ENCODE measurements at regions of chr1 and their contacts with region 1.

Region 1: GRCh38 chr1:202329891-202330290 is 11.8 kb downstream of the UBE2T start:
- DNase-seq: no peak
- H3K4me3 ChIP-seq: no peak overlapping the region
- H3K27ac ChIP-seq: no peak overlapping the region
- H3K4me1 ChIP-seq: peaks cover 0 to 7% (median 6%) of the 10 kb centered on the region in 4 donors
- H3K27me3 ChIP-seq: no peaks in the 10 kb centered on the region
- CTCF ChIP-seq: no peak
- EP300 ChIP-seq: no peak
- POLR2A ChIP-seq: no peak

Region 2: GRCh38 chr1:201408176-201408833 is 921.6 kb before region 1 on chr1:
- intact Hi-C with region 1: no loop called
- DNase-seq: no peak
- H3K4me3 ChIP-seq: no peak overlapping the region
- H3K27ac ChIP-seq: no peak overlapping the region
- H3K4me1 ChIP-seq: no peaks in the 10 kb centered on the region
- H3K27me3 ChIP-seq: no peaks in the 10 kb centered on the region
- CTCF ChIP-seq: peak; percentile 72 to 93 (median 89)
- EP300 ChIP-seq: no peak
- POLR2A ChIP-seq: no peak

Region 3: DNA sequence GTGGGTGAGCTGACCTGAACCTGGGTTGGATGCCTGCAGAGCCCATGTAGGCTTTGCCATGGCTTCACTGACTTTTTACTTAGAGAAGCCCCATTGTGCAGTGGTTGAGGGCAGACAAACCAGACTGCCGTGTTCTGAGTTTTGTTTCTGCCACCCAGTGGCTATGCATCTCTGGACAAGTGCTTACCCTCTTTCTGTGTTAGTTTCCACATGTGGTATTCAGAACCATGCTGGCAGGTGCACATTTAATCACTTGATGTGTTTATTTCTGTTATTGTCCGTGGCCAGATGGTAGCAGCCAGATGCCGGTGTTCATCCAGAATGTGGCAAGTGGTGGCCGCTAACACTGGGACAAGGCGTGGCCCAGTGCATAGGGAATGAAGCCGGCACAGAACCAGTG is 159.2 kb before region 1 on chr1:
- intact Hi-C with region 1: no loop called
- DNase-seq: no peak
- H3K4me3 ChIP-seq: no peak overlapping the region
- H3K27ac ChIP-seq: no peak overlapping the region
- H3K4me1 ChIP-seq: peaks cover 0 to 11% (median 6%) of the 10 kb centered on the region in 4 donors
- H3K27me3 ChIP-seq: no peaks in the 10 kb centered on the region
- CTCF ChIP-seq: no peak
- EP300 ChIP-seq: no peak
- POLR2A ChIP-seq: no peak

Region 4: GRCh38 chr1:202376247-202376646 is 46.4 kb after region 1 on chr1:
- intact Hi-C with region 1: no loop called
- DNase-seq: no peak
- H3K4me3 ChIP-seq: no peak overlapping the region
- H3K27ac ChIP-seq: no peak overlapping the region
- H3K4me1 ChIP-seq: peaks cover 0 to 12% (median 6%) of the 10 kb centered on the region in 4 donors
- H3K27me3 ChIP-seq: no peaks in the 10 kb centered on the region
- CTCF ChIP-seq: no peak
- EP300 ChIP-seq: no peak
- POLR2A ChIP-seq: no peak

Region 5: GRCh38 chr1:202852163-202852904 is 522.4 kb after region 1 on chr1:
- intact Hi-C with region 1: loop called (anchors 5 kb)
- DNase-seq: no peak
- H3K4me3 ChIP-seq: no peak overlapping the region
- H3K27ac ChIP-seq: no peak overlapping the region
- H3K4me1 ChIP-seq: no peaks in the 10 kb centered on the region
- H3K27me3 ChIP-seq: no peaks in the 10 kb centered on the region
- CTCF ChIP-seq: peak in 1 of 3 experiments; percentile 25
- EP300 ChIP-seq: no peak
- POLR2A ChIP-seq: no peak